Activated T-helper 1 cell treated with anti-CD3 and anti-CD28 coated beads, Interleukin-12 subunit alpha, Interleukin-12 subunit beta, Interleukin-2, Interleukin-4 antibody, amounts not matched to agents 30 ng/mL and 10 ng/mL and 1 ng/mL, durations not matched to agents 14 hours and 24 hours and 36 hours (primary cell): ENCODE measurements at regions of chr5 and their contacts with region 1.

Region 1: GRCh38 chr5:56148453-56148971 is 84.6 kb downstream of the ANKRD55 start:
- DNase-seq: peak; percentile 43
- H3K4me3 Mint-ChIP-seq: peak overlapping the region; percentile 23
- H3K27ac Mint-ChIP-seq: peak overlapping the region; percentile 81
- H3K4me1 Mint-ChIP-seq: peaks cover 60% of the 10 kb centered on the region
- H3K27me3 Mint-ChIP-seq: no peaks in the 10 kb centered on the region

Region 2: GRCh38 chr5:56026863-56027300 is 121.6 kb before region 1 on chr5:
- intact Hi-C with region 1: loop called (anchors 1 kb)
- DNase-seq: no peak
- H3K4me3 Mint-ChIP-seq: no peak overlapping the region
- H3K27ac Mint-ChIP-seq: no peak overlapping the region
- H3K4me1 Mint-ChIP-seq: peaks cover 23% of the 10 kb centered on the region
- H3K27me3 Mint-ChIP-seq: peaks cover 32% of the 10 kb centered on the region

Region 3: DNA sequence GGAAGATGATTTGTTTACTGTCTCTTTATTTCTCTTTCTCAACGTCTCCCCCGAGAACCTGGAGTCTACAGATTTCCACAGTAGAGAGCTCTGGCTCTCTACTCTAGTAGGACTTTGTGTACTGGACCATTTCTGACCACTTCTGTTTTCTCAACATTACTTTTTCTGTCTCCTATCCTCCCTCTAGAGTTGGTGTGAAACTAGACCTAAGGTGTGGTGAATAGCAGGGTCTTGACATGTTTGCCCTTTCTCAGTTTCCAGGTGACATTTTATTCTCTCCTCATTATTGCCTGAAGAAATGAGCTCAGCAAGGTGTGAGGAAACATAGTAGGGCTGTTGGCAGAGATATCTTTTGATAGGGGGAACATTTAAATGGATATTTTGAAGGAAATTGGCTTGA is 91.6 kb before region 1 on chr5:
- intact Hi-C with region 1: loop called (anchors 2 kb)
- DNase-seq: no peak
- H3K4me3 Mint-ChIP-seq: no peak overlapping the region
- H3K27ac Mint-ChIP-seq: no peak overlapping the region
- H3K4me1 Mint-ChIP-seq: peaks cover 52% of the 10 kb centered on the region
- H3K27me3 Mint-ChIP-seq: peaks cover 5% of the 10 kb centered on the region

Region 4: DNA sequence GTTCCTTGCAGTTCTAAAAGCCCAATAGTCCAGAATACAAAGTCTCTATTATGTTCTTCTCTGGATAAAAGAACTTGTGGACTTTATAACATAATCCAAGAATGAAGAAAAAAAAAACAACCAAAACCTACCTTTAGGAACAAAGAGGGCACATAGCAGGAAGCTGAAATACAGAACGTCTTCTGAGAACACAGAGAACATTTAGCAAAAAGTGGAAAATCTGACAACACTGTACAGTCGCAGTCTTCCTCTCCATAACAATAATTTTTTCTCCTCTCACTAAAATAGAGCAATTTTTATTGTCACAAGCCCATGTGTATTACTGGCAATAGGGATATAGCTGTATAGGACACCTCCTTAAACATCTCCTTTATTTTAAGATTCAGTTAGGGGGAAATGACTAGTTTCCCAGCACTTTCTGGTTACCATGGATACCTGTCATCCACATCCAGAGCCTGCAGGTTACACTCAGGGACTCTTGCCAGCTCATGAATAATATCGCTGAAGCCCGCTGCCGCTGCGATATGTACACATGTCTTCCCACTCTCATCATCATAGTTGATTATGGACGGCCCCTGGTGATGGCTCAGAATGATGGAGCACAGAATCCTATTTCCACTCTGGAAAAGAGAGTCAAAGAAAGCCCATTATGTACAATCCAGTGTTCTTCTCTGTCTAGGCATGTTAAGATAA is 21.9 kb before region 1 on chr5:
- intact Hi-C with region 1: loop called (anchors 1 kb)
- DNase-seq: no peak
- H3K4me3 Mint-ChIP-seq: peak overlapping the region; percentile 76
- H3K27ac Mint-ChIP-seq: peak overlapping the region; percentile 94
- H3K4me1 Mint-ChIP-seq: peaks cover 40% of the 10 kb centered on the region
- H3K27me3 Mint-ChIP-seq: no peaks in the 10 kb centered on the region

Region 5: GRCh38 chr5:56200856-56201666 is 52.5 kb after region 1 on chr5:
- intact Hi-C with region 1: loop called (anchors 1 kb)
- DNase-seq: peak; percentile 48
- H3K4me3 Mint-ChIP-seq: no peak overlapping the region
- H3K27ac Mint-ChIP-seq: no peak overlapping the region
- H3K4me1 Mint-ChIP-seq: peaks cover 27% of the 10 kb centered on the region
- H3K27me3 Mint-ChIP-seq: no peaks in the 10 kb centered on the region